Adrenal gland (tissue), 19 donors: ENCODE measurements at regions of chr2 and their contacts with region 1.

Region 1: GRCh38 chr2:88307817-88308216 is 137.7 kb downstream of the THNSL2 start:
- DNase-seq: peak in 4 of 7 donors; percentile 16 to 41 (median 30)
- H3K4me3 ChIP-seq: no peak overlapping the region
- H3K27ac ChIP-seq: no peak overlapping the region
- H3K4me1 ChIP-seq: no peaks in the 10 kb centered on the region
- H3K27me3 ChIP-seq: no peaks in the 10 kb centered on the region
- CTCF ChIP-seq: peak; percentile 13 to 48 (median 35)
- POLR2A ChIP-seq: no peak

Region 2: DNA sequence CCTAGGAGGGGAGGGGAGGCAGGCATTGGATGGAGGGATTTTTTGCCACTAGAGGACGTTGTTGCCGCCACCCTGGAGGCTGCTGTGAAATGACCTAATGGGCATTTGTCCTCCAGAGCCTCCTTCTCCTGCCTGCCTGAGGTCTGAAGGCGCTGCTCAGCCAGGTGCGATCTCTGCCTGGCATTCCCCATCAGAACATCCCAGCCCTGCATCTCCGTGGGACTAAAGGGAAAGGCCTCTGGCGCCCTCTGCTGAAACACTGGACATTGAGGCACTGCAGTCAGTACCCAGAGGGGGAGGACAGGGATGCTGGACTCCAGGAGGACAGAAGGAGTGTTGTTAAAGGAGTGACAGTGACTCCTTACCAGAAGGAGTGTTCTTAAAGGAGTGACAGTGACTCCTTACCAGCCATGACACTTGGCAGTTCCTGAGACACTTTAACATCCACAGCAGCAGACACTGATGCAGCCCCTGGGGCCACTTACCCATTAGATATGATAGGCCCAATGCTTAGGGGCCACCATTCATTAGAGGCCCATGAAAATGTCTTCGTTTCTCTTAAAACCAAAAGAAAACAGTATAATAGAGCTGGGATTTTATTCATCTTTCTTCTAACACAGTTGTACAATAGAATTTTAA is 120.7 kb before region 1 on chr2:
- intact Hi-C with region 1: loop called in 1 of 2 experiments (anchors 5 kb)
- DNase-seq: peak; percentile 42 to 72 (median 63)
- H3K4me3 ChIP-seq: no peak overlapping the region
- H3K27ac ChIP-seq: no peak overlapping the region
- H3K4me1 ChIP-seq: no peaks in the 10 kb centered on the region
- H3K27me3 ChIP-seq: no peaks in the 10 kb centered on the region
- CTCF ChIP-seq: peak; percentile 30 to 62 (median 50)
- POLR2A ChIP-seq: no peak

Region 3: GRCh38 chr2:88239781-88240180 is 68.0 kb before region 1 on chr2:
- intact Hi-C with region 1: no loop called
- DNase-seq: no peak
- H3K4me3 ChIP-seq: no peak overlapping the region
- H3K27ac ChIP-seq: no peak overlapping the region
- H3K4me1 ChIP-seq: no peaks in the 10 kb centered on the region
- H3K27me3 ChIP-seq: no peaks in the 10 kb centered on the region
- CTCF ChIP-seq: no peak
- POLR2A ChIP-seq: no peak